ENCODE measurements at regions of chr3 and their contacts with region 1.

Region 1: DNA sequence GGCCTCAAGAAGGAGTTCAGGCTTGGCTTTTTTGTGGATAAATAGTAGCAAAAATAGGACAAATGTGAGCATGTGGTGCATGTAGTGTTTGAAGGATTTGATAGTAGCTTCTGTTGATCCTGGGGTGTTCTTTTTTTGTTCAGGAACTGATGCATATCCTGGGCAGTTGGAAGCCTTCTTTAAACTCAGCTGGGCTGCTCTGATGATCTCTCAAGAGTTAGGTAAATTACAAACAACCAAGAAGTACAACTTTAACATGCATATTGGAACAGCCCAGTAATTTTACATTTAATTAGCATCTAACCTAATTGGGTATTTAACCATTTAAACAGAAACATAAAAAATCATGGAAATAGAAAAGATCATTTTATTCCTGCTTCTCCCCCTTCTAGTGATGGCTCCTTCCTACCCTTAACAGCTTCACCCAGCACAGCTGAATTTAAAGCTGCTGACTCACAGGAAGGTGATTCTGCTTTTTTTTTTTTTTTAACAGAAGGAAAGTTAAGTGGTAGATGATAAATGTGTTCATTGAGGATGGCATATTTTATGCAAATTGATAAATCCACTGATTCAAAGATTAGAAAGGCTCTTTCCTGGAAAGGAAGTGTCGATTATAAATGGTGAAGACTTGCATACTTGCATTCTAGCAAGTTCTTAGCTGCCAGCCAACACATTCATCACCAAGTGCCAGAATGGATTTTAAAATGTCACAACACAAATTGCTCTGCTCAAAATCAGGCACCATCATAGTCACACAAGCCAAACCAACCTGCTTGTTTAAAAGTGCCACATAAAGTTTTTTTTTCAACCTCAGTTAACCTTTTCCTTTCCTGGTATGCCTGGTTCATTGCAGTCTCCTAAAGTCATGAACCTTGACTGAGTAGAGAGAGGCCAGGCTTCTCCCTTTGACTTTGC is 20.0 kb downstream of the SLC35G2 start:
- DNase-seq: peak in 1 of 2 experiments; percentile 60
- H3K4me3 ChIP-seq: no peak overlapping the region
- H3K27ac ChIP-seq: peak overlapping the region; percentile 38
- H3K4me1 ChIP-seq: 0 out of 2 replicates have a peak, but pooled peaks cover 12% of the 10 kb centered on the region
- H3K27me3 ChIP-seq: no peaks in the 10 kb centered on the region
- CTCF ChIP-seq: no peak

Region 2: DNA sequence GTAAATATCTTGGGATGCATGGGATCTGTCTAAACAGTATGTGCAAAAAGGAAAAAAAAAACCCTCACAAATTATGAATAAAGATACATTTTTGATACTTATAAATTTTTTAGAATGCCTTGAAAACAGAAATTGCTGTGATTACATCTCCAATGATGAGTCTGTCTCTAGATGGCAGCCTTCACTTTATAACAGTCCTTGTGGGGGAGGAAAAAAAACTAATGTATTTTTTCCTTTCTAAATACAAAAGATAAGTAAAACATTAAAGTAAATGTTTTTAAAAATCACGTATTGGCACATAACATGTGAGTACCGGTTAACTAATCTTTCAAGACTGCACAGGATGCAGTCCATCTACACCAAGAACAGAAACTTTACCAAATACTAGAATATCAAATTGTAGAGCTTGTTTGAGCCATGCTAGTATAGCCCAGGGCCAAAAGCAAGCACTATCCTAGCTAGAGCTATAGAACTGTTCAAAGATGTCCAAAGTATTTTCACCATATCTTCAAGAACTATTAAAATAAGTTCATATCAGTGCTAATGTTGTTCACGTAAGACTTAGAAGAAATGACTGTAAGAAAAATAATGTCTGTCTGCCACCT is 293.1 kb before region 1 on chr3:
- CTCF ChIA-PET with region 1: no interaction called
- POLR2A ChIA-PET with region 1: interaction called, 12 read pairs
- intact Hi-C with region 1: no loop called
- DNase-seq: no peak
- H3K4me3 ChIP-seq: no peak overlapping the region
- H3K27ac ChIP-seq: no peak overlapping the region
- H3K4me1 ChIP-seq: 0 out of 2 replicates have a peak, but pooled peaks cover 4% of the 10 kb centered on the region
- H3K27me3 ChIP-seq: no peaks in the 10 kb centered on the region
- CTCF ChIP-seq: peak; percentile 40; the same call in 1 of the 2 replicates

Region 3: DNA sequence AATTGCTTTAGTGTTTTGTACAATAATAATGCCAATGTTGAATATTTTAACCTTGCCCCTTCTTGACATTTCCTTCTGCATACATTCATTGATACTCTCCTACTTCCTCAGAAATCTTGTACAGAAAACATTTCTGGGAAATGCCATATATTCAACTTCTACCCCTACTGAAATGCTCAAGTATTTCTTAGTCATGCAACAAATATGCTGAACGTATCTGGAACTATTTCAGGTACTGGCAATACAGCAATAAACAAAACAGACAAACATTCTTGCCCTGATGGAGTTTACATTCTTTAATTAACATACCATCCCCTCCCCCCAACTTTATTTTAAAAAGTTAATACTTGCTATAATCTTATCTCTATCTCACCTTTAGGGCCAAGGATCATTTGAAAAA is 233.9 kb before region 1 on chr3:
- CTCF ChIA-PET with region 1: no interaction called
- POLR2A ChIA-PET with region 1: interaction called, 21 read pairs
- intact Hi-C with region 1: no loop called
- DNase-seq: no peak
- H3K4me3 ChIP-seq: no peak overlapping the region
- H3K27ac ChIP-seq: no peak overlapping the region
- H3K4me1 ChIP-seq: peaks cover 11% of the 10 kb centered on the region; the same call in 1 of the 2 replicates
- H3K27me3 ChIP-seq: no peaks in the 10 kb centered on the region
- CTCF ChIP-seq: no peak

Measured in PC-9 (cell line).